ENCODE measurements at regions of chr2 and their contacts with region 1.

Region 1: DNA sequence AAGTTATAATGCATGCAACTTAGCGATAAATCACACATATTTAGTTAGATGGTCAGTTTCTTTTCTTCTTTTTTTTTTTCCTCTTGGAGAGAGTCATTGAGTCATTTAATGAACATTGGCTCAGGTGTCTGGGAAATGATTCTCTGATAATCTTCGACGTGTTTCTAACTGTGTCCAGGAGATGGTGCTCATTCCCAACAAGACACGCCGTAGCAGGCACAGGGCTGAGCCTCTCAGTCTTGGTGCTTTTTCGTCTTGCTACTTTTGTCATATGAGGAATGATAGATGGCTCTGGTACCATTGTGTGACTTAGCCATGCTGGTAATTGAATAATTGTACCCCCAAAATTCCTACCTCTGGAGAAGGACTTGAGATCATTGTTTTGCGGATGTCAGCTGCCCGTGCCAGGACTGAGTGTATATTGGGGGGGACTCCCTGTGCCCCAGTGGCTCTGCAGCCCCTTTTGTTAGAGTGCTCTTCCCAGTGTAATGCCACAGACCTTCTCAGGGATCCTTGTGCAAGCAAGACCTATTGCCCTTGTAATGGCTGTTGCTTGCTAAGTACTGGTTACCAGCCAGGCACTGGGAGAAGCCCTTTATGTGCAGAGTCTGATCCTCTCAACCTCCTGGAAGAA is 107.6 kb upstream of the CYRIA start:
- DNase-seq: peak; percentile 74
- H3K4me3 ChIP-seq: no peak overlapping the region
- H3K27ac ChIP-seq: no peak overlapping the region
- H3K4me1 ChIP-seq: no peaks in the 10 kb centered on the region
- H3K27me3 ChIP-seq: no peaks in the 10 kb centered on the region; the same call in 1 of the 2 replicates

Region 2: GRCh38 chr2:16466133-16466820 is 306.9 kb before region 1 on chr2:
- in situ Hi-C with region 1: no loop called
- DNase-seq: no peak
- H3K4me3 ChIP-seq: no peak overlapping the region
- H3K27ac ChIP-seq: no peak overlapping the region
- H3K4me1 ChIP-seq: no peaks in the 10 kb centered on the region
- H3K27me3 ChIP-seq: no peaks in the 10 kb centered on the region

Region 3: DNA sequence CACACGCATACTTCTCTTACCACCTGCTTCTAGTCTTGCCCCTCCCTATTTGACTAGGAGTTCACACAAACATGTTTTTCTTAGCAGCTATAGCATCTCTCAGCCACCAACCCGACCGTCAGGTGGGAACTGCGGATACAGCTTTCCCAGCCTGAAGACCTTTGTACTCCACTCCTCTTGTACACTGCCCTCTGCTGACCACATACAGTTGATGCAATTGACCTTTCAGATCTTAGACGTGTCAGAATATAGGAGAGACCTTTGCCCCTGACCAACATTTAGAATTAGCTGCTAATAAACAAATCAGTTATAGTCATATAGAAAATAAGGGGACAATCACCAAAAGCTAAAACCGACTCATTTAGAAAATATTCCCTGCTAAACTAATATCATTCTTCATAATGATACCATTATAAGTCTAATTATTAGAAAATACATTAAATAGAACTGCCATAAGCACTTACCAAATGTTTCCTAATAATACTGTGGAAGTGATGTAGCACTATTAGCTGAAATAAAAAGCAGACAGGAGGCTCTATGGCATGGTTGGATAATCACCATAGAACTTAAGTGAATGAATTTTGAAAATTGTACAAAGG is 536.6 kb after region 1 on chr2:
- in situ Hi-C with region 1: loop called (anchors 10 kb)
- DNase-seq: peak; percentile 63
- H3K4me3 ChIP-seq: no peak overlapping the region
- H3K27ac ChIP-seq: no peak overlapping the region
- H3K4me1 ChIP-seq: peaks cover 5% of the 10 kb centered on the region
- H3K27me3 ChIP-seq: no peaks in the 10 kb centered on the region

Region 4: GRCh38 chr2:17672583-17673317 is 899.6 kb after region 1 on chr2:
- in situ Hi-C with region 1: loop called (anchors 10 kb)
- DNase-seq: peak; percentile 83
- H3K4me3 ChIP-seq: no peak overlapping the region
- H3K27ac ChIP-seq: peak overlapping the region; percentile 43
- H3K4me1 ChIP-seq: peaks cover 5% of the 10 kb centered on the region
- H3K27me3 ChIP-seq: no peaks in the 10 kb centered on the region

Measured in GM23248 (cell line).